Activated T-helper 1 cell treated with anti-CD3 and anti-CD28 coated beads, Interleukin-12 subunit alpha, Interleukin-12 subunit beta, Interleukin-2, Interleukin-4 antibody, amounts not matched to agents 30 ng/mL and 10 ng/mL and 1 ng/mL, durations not matched to agents 14 hours and 24 hours and 36 hours (primary cell): ENCODE measurements at regions of chr22 and their contacts with region 1.

Region 1: DNA sequence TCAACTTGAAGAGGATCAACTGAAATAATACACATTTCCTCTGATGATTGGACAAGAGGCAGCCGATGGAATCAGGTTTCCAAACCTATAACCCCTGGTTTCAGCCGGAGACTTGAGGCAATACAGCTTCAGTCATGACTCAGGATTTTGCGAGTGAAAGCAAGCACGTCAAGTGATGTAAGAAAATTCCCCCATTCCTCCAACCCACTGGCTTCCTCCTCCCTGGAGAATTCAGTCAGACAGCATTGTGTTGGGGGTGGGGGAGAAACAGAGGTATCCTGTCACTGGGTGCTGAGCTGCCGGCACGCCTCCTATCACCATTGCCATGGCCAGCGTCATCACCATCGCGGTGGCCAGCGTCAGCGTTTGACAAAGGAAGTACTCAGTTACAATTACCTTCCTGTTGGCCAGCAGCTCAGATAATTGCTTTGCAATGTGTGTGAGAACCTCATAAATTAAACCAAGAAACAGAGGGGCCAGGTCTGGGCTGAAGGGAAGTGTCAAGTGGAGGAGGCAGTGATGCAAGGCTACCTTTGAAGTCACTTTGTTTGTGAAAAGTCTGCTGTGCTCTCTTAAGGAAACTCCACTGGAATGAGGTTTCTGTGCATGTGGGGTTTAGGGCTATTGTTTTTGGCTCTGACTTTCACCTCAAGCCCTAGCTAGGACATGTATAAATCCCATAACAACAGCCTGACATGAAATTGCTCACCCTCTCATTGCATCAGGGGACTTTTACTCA is 50.2 kb downstream of the LIF start:
- DNase-seq: peak; percentile 59
- H3K4me3 Mint-ChIP-seq: peak overlapping the region; percentile 64
- H3K27ac Mint-ChIP-seq: peak overlapping the region; percentile 96
- H3K4me1 Mint-ChIP-seq: peaks cover 74% of the 10 kb centered on the region
- H3K27me3 Mint-ChIP-seq: no peaks in the 10 kb centered on the region

Region 2: GRCh38 chr22:30159561-30160353 is 36.6 kb before region 1 on chr22:
- intact Hi-C with region 1: loop called (anchors 1 kb)
- DNase-seq: no peak
- H3K4me3 Mint-ChIP-seq: peak overlapping the region; percentile 45
- H3K27ac Mint-ChIP-seq: peak overlapping the region; percentile 93
- H3K4me1 Mint-ChIP-seq: peaks cover 70% of the 10 kb centered on the region
- H3K27me3 Mint-ChIP-seq: peaks cover 2% of the 10 kb centered on the region

Region 3: DNA sequence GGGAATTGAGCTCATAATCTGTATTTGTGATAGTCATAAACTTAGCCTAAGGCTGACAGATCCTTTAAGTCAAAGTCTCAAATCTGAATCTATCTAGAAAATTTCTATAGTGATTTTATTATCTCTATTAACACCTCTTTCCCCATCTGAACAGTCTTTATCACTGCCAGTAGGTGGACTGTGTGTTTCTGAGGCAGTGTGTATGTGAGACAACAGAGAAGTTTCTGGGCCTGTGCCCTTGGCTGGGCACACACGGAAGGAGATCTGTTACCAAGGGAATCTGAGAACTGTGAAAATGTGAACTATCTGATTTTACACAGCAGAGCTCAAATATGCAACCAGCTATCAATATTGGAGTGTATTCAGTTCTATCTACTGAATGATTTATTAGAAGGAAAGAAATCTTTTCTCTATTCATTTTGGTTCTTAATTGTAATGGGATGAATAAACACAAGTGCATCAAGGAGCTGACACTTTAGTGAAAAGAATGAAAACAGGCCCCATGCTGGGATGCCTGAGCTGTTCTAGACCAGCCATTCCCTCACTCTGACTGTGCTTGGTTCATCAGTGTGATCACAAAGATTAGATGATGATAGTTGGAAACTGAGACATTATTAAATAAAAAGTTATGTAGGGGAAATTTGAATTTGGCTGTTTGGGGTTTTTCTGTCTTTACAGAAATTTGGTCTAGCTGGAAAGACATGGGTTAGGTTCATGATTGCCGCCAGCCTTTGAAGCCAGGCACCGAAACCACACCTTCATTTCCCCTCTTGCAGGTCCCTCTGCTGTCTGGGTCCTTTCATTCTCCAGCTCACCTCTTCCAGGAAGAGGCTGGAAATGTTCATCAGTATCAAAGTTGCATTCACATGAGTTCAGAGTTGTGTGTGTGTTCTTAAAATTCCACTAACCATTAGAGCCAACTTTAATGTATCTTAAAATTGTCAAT is 17.9 kb before region 1 on chr22:
- intact Hi-C with region 1: loop called (anchors 2 kb)
- DNase-seq: peak; percentile 49
- H3K4me3 Mint-ChIP-seq: peak overlapping the region; percentile 56
- H3K27ac Mint-ChIP-seq: peak overlapping the region; percentile 97
- H3K4me1 Mint-ChIP-seq: peaks cover 87% of the 10 kb centered on the region
- H3K27me3 Mint-ChIP-seq: no peaks in the 10 kb centered on the region

Region 4: DNA sequence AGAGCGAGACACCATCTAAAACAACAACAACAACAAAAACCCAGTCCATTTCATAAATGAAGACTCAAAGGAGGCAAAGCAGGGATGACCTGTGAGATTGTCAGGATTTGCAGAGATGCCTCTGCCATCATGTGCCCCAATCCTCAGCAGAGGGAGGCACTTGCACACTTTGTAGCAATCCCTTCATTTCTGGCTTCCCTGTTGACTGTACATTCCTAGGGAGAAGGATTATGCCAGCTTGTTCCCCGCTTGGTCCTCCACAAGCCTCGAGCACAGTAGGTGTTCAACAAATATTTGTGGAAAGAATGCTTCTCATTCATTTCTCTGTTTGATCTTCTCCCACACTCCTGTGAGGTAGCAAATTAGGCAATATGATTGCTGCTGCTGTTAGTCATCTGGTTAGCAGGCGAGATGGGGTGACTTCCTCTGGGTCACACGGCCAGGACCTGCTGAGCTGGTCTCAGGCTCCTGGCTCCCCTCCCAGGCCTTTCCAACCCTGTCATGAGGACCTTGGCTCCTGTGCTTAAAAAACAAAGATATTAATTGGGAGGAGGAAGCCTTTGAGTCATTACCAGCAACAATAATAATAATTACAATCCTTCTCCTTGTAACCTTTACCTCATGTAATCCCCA is 16.2 kb after region 1 on chr22:
- intact Hi-C with region 1: loop called (anchors 2 kb)
- DNase-seq: no peak
- H3K4me3 Mint-ChIP-seq: peak overlapping the region; percentile 4
- H3K27ac Mint-ChIP-seq: peak overlapping the region; percentile 81
- H3K4me1 Mint-ChIP-seq: peaks cover 54% of the 10 kb centered on the region
- H3K27me3 Mint-ChIP-seq: no peaks in the 10 kb centered on the region

Region 5: GRCh38 chr22:30245985-30246901 is 49.9 kb after region 1 on chr22 and contains the start of gene LIF:
- intact Hi-C with region 1: loop called (anchors 1 kb)
- DNase-seq: peak; percentile 53
- H3K4me3 Mint-ChIP-seq: peak within 1 kb of the TSS; percentile 100
- H3K27ac Mint-ChIP-seq: peak within 1 kb of the TSS; percentile 100
- H3K4me1 Mint-ChIP-seq: peaks cover 64% of the 10 kb centered on the region
- H3K27me3 Mint-ChIP-seq: no peaks in the 10 kb centered on the region
- total RNA-seq, gene LIF: 450 and 455 TPM in 2 replicates